Activated CD4-positive, alpha-beta T cell treated with anti-CD3 and anti-CD28 coated beads, Interleukin-2, amount 10 ng/mL, durations not matched to agents 24 days and 14 days (primary cell): ENCODE measurements at regions of chr14 and their contacts with region 1.

Region 1: DNA sequence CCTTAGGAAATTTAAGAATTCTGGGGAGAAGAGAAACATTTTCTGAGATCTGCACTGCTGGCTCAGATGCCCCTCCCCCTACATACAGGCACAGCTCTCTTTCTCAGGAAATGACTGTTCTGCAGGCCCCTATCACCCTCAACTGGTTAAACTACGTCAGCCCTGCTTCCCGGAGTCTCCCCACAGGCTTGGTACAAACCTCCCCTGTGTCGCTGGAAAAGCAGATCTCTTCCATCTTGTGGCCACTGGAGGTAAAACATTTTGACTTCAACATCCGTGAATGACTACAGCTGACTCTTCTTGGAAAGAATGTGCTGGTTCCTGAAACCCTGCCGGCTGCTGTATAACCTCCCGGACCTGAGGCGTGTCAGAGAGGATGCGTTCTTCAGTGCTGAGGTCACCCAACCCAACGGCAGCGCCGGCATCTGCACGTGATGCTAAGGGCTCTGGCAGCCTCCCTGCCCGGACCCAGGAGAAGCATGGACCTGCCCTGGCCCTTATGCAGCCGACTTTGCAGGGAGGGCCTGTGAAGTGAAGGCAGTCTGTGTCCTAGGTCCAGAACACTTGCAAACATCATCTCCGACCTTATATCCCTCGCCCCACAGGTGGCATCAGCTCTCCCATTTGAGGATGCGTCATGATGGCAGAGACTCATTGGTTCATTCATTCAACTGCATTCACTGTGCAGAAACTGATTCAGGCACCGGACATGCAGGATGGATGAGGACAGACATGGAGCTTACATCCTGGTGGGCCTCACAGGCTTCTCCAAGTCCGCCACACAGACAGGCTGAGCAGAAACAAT is 129.3 kb downstream of the GCH1 start:
- DNase-seq: peak; percentile 93
- H3K4me3 Mint-ChIP-seq: peak overlapping the region; percentile 70
- H3K27ac Mint-ChIP-seq: peak overlapping the region; percentile 83
- H3K4me1 Mint-ChIP-seq: peaks cover 38% of the 10 kb centered on the region
- H3K27me3 Mint-ChIP-seq: peaks cover 3% of the 10 kb centered on the region

Region 2: DNA sequence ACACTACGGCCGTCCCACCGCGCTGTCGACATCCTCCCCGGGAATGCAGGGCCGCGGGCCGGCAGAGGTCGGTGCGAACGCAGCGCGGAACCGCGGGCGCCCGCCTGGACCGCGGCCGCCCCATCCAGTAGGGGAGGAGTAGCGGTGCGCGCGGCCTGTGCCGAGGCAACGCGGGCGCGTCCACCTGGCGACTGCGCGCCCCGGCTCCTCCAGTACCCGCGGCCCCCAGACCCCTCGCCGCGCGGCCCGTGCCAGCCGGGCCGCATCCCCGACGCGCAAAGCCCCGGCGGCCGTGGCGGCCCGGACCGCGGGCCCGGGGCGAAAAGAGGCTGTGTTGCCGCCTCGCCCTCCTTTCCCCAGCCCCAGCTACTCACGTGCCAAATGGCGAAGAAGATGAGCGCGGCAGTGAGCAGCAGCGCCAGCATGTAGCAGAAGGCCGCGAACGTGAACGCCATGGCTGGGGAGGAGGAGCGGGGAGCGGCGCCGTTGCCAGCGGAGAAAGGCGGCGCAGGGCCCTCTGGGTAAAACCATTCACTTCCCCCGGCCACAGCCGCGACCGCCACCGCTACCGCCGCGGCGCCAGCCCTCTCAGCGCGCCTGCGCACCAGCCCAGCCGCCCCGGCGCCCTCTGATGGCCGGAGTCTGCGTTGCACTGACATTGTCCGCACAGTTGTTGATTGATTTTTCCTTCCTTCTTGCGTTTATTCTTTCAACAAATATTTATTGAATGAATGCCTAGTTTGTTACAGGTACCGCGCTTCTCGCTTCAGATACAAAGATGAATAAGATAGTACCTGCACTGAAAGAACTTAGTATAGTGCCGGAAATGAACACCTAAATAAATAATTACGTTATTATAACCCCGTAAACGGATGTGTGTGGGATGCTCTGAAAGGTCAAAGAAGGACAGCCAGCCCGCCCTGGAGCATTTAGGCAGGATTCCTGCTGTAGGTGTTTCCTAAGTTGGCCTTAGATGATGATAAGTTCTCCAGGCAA is 332.2 kb before region 1 on chr14 and contains the start of gene CNIH1:
- intact Hi-C with region 1: loop called (anchors 2 kb)
- DNase-seq: peak; percentile 99
- H3K4me3 Mint-ChIP-seq: peak within 1 kb of the TSS; percentile 95
- H3K27ac Mint-ChIP-seq: peak within 1 kb of the TSS; percentile 94
- H3K4me1 Mint-ChIP-seq: peaks cover 42% of the 10 kb centered on the region
- H3K27me3 Mint-ChIP-seq: peaks cover 2% of the 10 kb centered on the region
- total RNA-seq, gene CNIH1: 113 and 116 TPM in 2 replicates

Region 3: GRCh38 chr14:54627540-54628363 is 145.6 kb before region 1 on chr14:
- intact Hi-C with region 1: loop called (anchors 1 kb)
- DNase-seq: peak; percentile 88
- H3K4me3 Mint-ChIP-seq: peak overlapping the region; percentile 67
- H3K27ac Mint-ChIP-seq: peak overlapping the region; percentile 72
- H3K4me1 Mint-ChIP-seq: peaks cover 37% of the 10 kb centered on the region
- H3K27me3 Mint-ChIP-seq: no peaks in the 10 kb centered on the region

Region 4: DNA sequence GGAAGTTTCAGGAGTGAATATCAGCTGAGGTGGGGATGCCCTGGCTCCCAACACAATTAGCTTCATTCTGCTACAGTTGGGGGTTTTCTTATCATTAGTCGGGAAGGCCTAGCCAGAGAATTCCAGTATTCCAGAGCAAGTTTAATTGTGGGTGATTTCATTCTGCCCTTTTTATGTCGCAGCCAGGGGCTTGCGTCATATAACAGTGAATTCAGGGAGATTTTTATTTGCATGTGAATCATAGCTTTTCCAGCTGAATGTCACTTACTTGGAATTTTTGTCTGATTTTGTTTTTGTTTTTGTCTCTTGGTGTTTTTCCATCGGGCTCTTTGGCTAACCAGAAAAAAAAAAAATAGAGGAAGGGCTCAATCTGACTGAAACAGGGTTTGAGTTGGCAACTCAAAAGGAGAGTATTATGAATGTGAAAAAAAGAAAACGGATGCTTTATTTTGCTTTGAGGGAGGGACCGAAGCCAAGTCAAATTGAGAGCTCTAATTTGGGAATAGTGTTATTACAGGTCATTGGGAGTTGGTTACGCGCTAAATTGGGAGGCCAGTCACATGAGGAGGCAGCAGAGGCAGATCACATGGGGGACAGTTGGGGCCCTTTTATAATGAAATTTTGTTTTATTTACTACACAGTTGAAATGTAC is 87.0 kb before region 1 on chr14:
- intact Hi-C with region 1: loop called (anchors 1 kb)
- DNase-seq: no peak
- H3K4me3 Mint-ChIP-seq: no peak overlapping the region
- H3K27ac Mint-ChIP-seq: no peak overlapping the region
- H3K4me1 Mint-ChIP-seq: peaks cover 35% of the 10 kb centered on the region
- H3K27me3 Mint-ChIP-seq: peaks cover 33% of the 10 kb centered on the region

Region 5: GRCh38 chr14:54737132-54737711 is 36.2 kb before region 1 on chr14:
- intact Hi-C with region 1: loop called (anchors 1 kb)
- DNase-seq: no peak
- H3K4me3 Mint-ChIP-seq: peak overlapping the region; percentile 63
- H3K27ac Mint-ChIP-seq: peak overlapping the region; percentile 76
- H3K4me1 Mint-ChIP-seq: peaks cover 57% of the 10 kb centered on the region
- H3K27me3 Mint-ChIP-seq: peaks cover 5% of the 10 kb centered on the region

Region 6: DNA sequence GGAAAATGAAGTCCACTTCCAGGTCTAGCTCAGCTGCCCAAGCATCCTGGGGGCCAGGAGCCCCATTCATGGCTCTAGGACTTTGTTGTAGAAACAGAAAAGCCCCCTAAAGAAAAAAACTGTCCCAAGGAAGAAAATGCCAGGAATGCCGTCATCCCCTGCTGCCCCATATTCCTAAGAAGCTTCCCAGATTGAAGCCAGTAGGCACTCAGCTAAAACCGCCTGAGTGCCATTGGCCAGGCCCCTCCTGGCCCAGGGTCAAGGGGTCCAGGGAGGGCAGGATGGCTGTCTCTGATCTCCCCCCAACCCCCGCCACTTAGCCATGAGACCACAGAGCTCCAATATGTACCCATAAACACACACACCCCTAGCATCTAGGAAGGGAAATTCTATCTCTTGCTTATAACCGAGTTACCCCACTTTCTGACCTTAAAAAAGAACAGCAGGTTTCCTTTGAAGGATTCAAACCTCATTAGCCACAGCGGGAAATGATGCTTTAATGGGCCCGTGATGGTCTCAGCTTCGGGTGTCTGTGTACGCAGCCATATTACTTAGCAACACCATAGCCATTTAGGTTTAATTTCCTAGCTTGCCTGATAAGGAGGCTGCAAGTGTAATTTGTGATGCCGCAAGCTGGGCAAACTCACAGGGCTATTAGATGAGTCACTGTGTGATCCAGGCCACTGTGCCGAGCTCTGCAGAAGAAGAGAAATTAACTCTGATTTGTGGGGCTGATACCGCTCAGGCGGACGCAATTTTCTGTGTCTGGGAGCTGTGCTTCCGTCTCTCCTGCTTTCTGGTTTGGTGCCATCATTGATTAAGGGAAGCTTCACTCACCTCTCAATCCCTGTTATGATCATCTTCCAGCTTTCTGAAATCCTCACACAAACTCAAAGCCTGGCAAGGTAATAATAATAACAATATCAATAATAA is 45.1 kb after region 1 on chr14:
- intact Hi-C with region 1: no loop called
- DNase-seq: no peak
- H3K4me3 Mint-ChIP-seq: no peak overlapping the region
- H3K27ac Mint-ChIP-seq: no peak overlapping the region
- H3K4me1 Mint-ChIP-seq: no peaks in the 10 kb centered on the region
- H3K27me3 Mint-ChIP-seq: peaks cover 20% of the 10 kb centered on the region

Region 7: DNA sequence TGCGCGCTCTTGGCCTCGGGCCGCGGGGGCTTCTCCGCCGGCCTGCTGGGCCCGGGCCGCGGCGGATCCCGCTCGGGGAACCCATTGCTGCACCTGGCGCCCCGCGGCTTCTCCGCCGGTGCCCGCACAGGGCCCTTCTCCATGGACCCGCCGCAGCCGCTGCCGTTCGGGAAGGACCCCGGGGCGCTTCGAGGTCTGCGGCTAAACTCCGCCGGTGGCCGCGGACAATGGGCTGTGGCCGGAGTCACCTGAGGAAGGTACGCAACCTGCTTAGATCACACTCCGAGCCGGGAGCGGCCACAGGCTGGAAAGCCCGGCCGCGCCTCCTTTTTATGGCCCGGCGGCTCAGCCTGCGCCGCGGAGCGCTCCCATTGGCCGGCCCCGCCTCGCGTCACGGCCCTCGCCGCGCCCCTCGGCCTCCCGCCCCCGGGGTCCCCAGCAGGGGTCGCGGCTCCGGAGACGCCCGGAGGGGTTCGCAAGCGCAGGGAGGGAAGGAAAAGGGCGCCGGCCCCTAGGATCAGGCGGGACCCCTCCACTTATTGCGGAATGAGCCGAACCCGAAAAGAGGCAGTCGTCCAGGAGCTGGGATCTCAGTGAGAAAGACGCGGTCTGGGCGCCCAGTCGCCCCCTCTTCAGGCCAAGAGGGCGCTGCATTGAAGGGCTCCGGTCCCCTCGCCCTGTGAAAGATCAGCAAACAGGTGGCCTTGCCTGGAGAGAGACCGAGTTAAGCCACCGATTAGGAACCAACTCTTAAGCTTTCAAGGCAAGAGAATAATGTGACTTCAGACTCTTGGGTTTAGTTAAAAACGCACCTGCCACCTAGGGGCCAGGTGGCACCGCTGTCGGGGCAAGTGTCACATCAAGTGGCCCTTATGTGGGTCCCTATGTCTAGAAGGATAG is 129.4 kb after region 1 on chr14 and contains the start of gene GCH1:
- intact Hi-C with region 1: loop called (anchors 5 kb)
- DNase-seq: peak; percentile 95
- H3K4me3 Mint-ChIP-seq: peak within 1 kb of the TSS; percentile 90
- H3K27ac Mint-ChIP-seq: peak within 1 kb of the TSS; percentile 88
- H3K4me1 Mint-ChIP-seq: peaks cover 31% of the 10 kb centered on the region
- H3K27me3 Mint-ChIP-seq: no peaks in the 10 kb centered on the region
- total RNA-seq, gene GCH1: 49.8 and 49.9 TPM in 2 replicates